ENCODE measurements at regions of chr3 and their contacts with region 1.

Region 1: DNA sequence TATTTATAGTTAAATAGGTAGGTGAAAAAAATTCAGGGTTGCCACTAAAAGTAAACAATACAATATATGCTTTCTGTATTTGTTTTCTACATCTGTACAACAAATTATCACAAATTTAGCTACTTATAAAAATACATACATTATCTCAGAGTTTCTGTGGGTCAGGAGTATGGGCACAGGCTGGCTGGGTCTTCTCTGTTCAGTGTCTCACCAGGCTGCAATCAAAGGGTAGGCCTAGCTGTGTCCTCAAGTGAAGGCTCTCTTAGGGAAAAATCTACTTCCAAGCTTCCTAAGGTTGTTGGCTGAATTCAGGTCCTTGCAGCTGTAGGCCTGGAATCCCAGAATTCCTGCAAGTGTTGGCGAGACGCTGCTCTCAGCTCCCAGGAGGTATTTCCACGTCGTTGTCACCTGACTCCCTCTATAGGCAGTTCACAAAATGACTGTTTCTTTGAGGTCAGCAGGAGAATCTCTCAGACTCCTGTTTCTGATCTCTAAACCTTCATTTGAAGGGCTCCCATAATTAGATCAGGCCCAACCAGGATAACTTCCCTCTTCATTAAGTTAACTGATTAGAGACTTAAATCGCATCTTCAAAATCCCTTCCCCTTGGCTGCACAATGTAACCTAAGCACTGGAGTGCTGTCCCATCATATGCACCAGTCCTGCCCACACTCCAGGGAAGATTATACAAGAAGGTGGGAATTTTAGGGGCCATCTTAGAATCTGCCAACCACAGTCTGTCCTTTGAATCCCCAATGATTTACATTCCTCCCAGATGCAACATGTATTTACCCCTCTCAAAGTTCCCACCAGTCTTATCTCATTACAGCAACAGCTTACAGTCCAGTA is 296.6 kb downstream of the SUCLG2 start:
- DNase-seq: no peak
- H3K4me3 Mint-ChIP-seq: no peak overlapping the region
- H3K27ac Mint-ChIP-seq: no peak overlapping the region
- H3K4me1 Mint-ChIP-seq: peaks cover 24% of the 10 kb centered on the region
- H3K27me3 Mint-ChIP-seq: no peaks in the 10 kb centered on the region

Region 2: GRCh38 chr3:66971891-66972551 is 385.8 kb before region 1 on chr3:
- intact Hi-C with region 1: loop called (anchors 10 kb)
- DNase-seq: peak; percentile 89
- H3K4me3 Mint-ChIP-seq: peak overlapping the region; percentile 78
- H3K27ac Mint-ChIP-seq: peak overlapping the region; percentile 66
- H3K4me1 Mint-ChIP-seq: peaks cover 13% of the 10 kb centered on the region
- H3K27me3 Mint-ChIP-seq: peaks cover 11% of the 10 kb centered on the region

Region 3: GRCh38 chr3:66998113-66998903 is 359.5 kb before region 1 on chr3 and contains the start of gene KBTBD8:
- intact Hi-C with region 1: loop called (anchors 10 kb)
- DNase-seq: peak; percentile 99
- H3K4me3 Mint-ChIP-seq: peak within 1 kb of the TSS; percentile 89
- H3K27ac Mint-ChIP-seq: peak within 1 kb of the TSS; percentile 92
- H3K4me1 Mint-ChIP-seq: peaks cover 29% of the 10 kb centered on the region
- H3K27me3 Mint-ChIP-seq: peaks cover 24% of the 10 kb centered on the region
- total RNA-seq, gene KBTBD8: 16.8 and 17.0 TPM in 2 replicates

Region 4: DNA sequence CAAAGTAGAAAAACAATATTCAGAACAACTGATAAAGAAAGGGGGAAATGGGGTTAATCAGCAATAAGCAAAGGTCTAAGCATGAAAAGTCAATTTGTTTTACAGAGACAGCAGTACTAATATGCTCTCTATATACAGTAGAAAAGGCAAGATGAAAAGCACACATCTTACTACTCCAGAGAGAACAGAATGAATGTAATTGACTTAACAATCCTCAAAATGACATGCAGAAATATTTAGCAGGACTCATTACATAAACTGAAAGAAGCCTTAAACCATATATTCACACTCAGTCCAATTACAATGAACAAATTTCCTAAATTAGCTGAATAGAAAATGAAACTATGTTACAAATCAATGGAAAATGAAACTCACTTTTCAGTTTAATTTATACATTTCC is 23.2 kb before region 1 on chr3:
- intact Hi-C with region 1: loop called (anchors 1 kb)
- DNase-seq: no peak
- H3K4me3 Mint-ChIP-seq: no peak overlapping the region
- H3K27ac Mint-ChIP-seq: no peak overlapping the region
- H3K4me1 Mint-ChIP-seq: peaks cover 9% of the 10 kb centered on the region
- H3K27me3 Mint-ChIP-seq: peaks cover 3% of the 10 kb centered on the region

Region 5: GRCh38 chr3:67389176-67389575 is 31.3 kb after region 1 on chr3:
- intact Hi-C with region 1: no loop called
- DNase-seq: peak; percentile 39
- H3K4me3 Mint-ChIP-seq: no peak overlapping the region
- H3K27ac Mint-ChIP-seq: peak overlapping the region; percentile 5
- H3K4me1 Mint-ChIP-seq: peaks cover 14% of the 10 kb centered on the region
- H3K27me3 Mint-ChIP-seq: no peaks in the 10 kb centered on the region